Activated CD8-positive, alpha-beta memory T cell treated with anti-CD3 and anti-CD28 coated beads, Interleukin-2, amount 10 ng/mL, durations not matched to agents 7 days and 5 days (primary cell): ENCODE measurements at regions of chr17 and their contacts with region 1.

Region 1: GRCh38 chr17:16521070-16521727 is 29.2 kb upstream of the LRRC75A start:
- DNase-seq: peak; percentile 79
- ATAC-seq: peak; percentile 99
- H3K4me3 Mint-ChIP-seq: no peak overlapping the region
- H3K27ac Mint-ChIP-seq: no peak overlapping the region
- H3K4me1 Mint-ChIP-seq: peaks cover 7% of the 10 kb centered on the region
- H3K27me3 Mint-ChIP-seq: peaks cover 33% of the 10 kb centered on the region

Region 2: DNA sequence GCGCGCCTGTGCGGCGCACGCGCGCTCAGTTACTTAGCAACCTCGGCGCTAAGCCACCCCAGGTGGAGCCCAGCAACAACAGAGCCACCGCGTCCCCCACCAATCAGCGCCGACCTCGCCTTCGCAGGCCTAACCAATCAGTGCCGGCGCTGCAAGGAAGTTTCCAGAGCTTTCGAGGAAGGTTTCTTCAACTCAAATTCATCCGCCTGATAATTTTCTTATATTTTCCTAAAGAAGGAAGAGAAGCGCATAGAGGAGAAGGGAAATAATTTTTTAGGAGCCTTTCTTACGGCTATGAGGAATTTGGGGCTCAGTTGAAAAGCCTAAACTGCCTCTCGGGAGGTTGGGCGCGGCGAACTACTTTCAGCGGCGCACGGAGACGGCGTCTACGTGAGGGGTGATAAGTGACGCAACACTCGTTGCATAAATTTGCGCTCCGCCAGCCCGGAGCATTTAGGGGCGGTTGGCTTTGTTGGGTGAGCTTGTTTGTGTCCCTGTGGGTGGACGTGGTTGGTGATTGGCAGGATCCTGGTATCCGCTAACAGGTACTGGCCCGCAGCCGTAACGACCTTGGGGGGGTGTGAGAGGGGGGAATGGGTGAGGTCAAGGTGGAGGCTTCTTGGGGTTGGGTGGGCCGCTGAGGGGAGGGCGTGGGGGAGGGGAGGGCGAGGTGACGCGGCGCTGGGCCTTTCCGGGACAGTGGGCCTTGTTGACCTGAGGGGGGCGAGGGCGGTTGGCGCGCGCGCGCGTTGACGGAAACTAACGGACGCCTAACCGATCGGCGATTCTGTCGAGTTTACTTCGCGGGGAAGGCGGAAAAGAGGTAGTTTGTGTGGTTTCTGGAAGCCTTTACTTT is 140.3 kb before region 1 on chr17 and contains the start of gene UBB:
- CTCF ChIA-PET with region 1: interaction called, 16 read pairs
- DNase-seq: peak; percentile 98
- ATAC-seq: peak; percentile 92
- H3K4me3 Mint-ChIP-seq: peak within 1 kb of the TSS; percentile 93
- H3K27ac Mint-ChIP-seq: peak within 1 kb of the TSS; percentile 97
- H3K4me1 Mint-ChIP-seq: peaks cover 33% of the 10 kb centered on the region
- H3K27me3 Mint-ChIP-seq: no peaks in the 10 kb centered on the region
- total RNA-seq, gene UBB: 1,297 to 1,567 TPM

Region 3: GRCh38 chr17:16428098-16428882 is 92.9 kb before region 1 on chr17:
- CTCF ChIA-PET with region 1: interaction called, 10 read pairs
- DNase-seq: no peak
- ATAC-seq: peak; percentile 67
- H3K4me3 Mint-ChIP-seq: no peak overlapping the region
- H3K27ac Mint-ChIP-seq: no peak overlapping the region
- H3K4me1 Mint-ChIP-seq: no peaks in the 10 kb centered on the region
- H3K27me3 Mint-ChIP-seq: no peaks in the 10 kb centered on the region

Region 4: DNA sequence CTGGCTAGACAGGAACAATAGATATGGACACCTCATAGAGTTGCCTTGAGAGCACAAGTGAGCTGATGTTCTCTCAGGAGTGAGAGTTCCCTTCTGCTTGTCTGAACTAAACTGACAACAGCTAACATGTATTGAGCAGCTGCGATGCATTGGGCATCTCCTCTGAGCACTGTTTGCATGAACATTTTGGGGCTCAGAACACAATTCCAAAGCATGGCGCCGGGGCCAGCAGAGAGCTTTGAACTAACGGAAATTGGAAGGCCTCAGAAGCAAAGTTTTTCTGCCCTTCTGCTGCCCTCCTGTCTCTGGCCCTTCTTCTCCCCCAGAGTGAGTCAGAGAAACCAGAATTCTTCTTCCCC is 67.7 kb before region 1 on chr17:
- CTCF ChIA-PET with region 1: interaction called, 63 read pairs
- DNase-seq: no peak
- ATAC-seq: no peak
- H3K4me3 Mint-ChIP-seq: no peak overlapping the region
- H3K27ac Mint-ChIP-seq: peak overlapping the region; percentile 21
- H3K4me1 Mint-ChIP-seq: peaks cover 11% of the 10 kb centered on the region
- H3K27me3 Mint-ChIP-seq: no peaks in the 10 kb centered on the region

Region 5: DNA sequence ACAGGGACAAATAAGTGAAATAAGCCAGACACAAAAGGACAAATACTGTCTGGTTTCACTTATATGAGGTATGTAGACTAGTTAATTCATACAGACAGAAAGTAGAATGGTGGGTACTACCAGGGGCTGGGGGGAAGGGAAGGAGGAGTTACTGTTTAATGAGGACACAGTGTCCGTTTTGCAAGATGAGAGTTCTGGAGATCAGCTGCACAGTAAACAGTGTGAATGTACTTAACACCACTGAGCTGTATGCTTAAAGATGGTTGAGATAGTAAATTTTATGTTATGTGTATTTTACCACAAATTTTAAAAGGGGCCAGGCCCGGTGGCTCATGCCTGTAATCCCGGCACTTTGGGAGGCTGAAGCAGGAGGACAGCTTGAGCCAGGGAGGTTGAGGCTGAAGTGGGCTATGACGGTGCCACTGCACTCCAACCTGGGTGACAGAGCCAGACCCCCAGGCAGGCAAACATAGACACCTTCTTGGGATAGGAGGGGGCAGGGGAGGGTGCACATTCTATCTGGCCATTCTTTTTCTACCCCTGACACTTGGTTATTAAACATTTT is 52.7 kb before region 1 on chr17:
- CTCF ChIA-PET with region 1: no interaction called
- DNase-seq: no peak
- ATAC-seq: no peak
- H3K4me3 Mint-ChIP-seq: no peak overlapping the region
- H3K27ac Mint-ChIP-seq: no peak overlapping the region
- H3K4me1 Mint-ChIP-seq: no peaks in the 10 kb centered on the region
- H3K27me3 Mint-ChIP-seq: no peaks in the 10 kb centered on the region

Region 6: DNA sequence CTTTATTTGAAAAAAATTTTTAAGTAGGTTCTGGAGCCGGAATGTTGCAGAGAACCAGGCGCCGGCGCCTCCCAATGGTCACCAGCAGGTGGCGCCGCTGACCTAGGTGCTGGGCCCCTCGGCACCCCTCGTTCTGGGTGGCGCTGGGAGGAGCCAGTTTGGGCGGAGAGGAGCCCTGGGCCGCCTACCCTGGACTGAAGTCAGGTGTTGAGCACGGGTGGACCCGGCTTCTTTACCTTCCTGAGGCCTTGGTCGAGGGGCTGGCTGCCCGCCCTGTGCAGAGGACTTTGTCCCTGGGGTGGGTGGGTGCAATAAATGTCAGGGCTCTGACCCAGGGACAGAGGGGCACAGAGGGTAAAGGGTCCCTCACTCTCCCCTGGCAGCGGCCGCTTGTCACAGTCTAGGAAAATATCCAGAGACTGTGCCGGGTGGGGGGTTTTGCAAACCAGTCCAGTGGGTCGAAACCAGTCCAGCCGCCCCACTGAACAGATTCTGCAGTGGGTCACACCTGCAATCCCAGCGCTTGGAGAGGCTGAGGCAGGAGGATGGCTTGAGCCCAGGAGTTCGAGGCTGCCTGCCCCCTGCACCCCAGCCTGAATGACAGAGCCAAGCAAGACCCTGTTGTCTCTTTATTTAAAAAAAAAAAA is 480.8 kb after region 1 on chr17:
- CTCF ChIA-PET with region 1: no interaction called
- DNase-seq: peak; percentile 82
- ATAC-seq: peak; percentile 96
- H3K4me3 Mint-ChIP-seq: no peak overlapping the region
- H3K27ac Mint-ChIP-seq: no peak overlapping the region
- H3K4me1 Mint-ChIP-seq: no peaks in the 10 kb centered on the region
- H3K27me3 Mint-ChIP-seq: peaks cover 6% of the 10 kb centered on the region